HepG2 (cell line): ENCODE measurements at regions of chr14 and their contacts with region 1.

Region 1: GRCh38 chr14:66624299-66624937 is 116.5 kb downstream of the GPHN start:
- DNase-seq: peak; percentile 53
- ATAC-seq: peak; percentile 98
- H3K4me3 ChIP-seq: no peak overlapping the region
- H3K27ac ChIP-seq: no peak overlapping the region
- H3K4me1 ChIP-seq: peaks cover 18% of the 10 kb centered on the region
- H3K27me3 ChIP-seq: no peaks in the 10 kb centered on the region
- CTCF ChIP-seq: peak; percentile 77
- EP300 ChIP-seq: no peak
- POLR2A ChIP-seq: no peak
- RAD21 ChIP-seq: peak; percentile 52; the same call in 1 of the 2 replicates

Region 2: DNA sequence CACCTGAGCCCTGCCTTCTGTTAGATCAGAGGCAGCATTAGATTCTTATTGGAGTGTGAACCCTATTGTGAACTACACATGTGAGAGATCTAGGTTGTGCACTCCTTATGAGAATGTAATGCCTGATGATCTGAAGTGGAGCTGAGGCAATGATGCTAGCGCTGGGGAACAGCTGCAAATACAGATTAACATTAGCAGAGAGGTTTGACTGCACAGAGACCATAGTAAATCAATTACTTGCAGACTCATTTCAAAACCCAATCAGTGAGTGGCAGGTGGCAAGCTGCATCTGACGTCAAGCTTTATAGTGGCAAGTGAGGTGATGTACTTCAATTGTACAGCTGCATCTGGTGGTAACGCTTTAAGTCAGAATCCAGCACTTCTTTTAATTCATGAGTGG is 25.1 kb after region 1 on chr14:
- CTCF ChIA-PET with region 1: no interaction called
- POLR2A ChIA-PET with region 1: no interaction called
- in situ Hi-C with region 1: no loop called
- intact Hi-C with region 1: no loop called
- DNase-seq: no peak
- ATAC-seq: no peak
- H3K4me3 ChIP-seq: no peak overlapping the region
- H3K27ac ChIP-seq: no peak overlapping the region
- H3K4me1 ChIP-seq: 0 out of 2 replicates have a peak, but pooled peaks cover under 1% of the 10 kb centered on the region
- H3K27me3 ChIP-seq: no peaks in the 10 kb centered on the region
- CTCF ChIP-seq: no peak
- EP300 ChIP-seq: no peak
- POLR2A ChIP-seq: no peak
- RAD21 ChIP-seq: no peak

Region 3: GRCh38 chr14:66662374-66662773 is 38.0 kb after region 1 on chr14:
- CTCF ChIA-PET with region 1: interaction called, 9 read pairs
- POLR2A ChIA-PET with region 1: no interaction called
- in situ Hi-C with region 1: no loop called
- intact Hi-C with region 1: loop called (anchors 1 kb)
- DNase-seq: peak; percentile 10
- ATAC-seq: peak; percentile 61; the same call in 2 of the 3 replicates
- H3K4me3 ChIP-seq: no peak overlapping the region
- H3K27ac ChIP-seq: no peak overlapping the region
- H3K4me1 ChIP-seq: no peaks in the 10 kb centered on the region
- H3K27me3 ChIP-seq: no peaks in the 10 kb centered on the region
- CTCF ChIP-seq: peak; percentile 57
- EP300 ChIP-seq: no peak
- POLR2A ChIP-seq: no peak
- RAD21 ChIP-seq: no peak

Region 4: GRCh38 chr14:66746316-66747006 is 122.0 kb after region 1 on chr14:
- CTCF ChIA-PET with region 1: no interaction called
- POLR2A ChIA-PET with region 1: no interaction called
- in situ Hi-C with region 1: no loop called
- intact Hi-C with region 1: loop called (anchors 5 kb)
- DNase-seq: peak; percentile 12
- ATAC-seq: peak; percentile 64
- H3K4me3 ChIP-seq: no peak overlapping the region
- H3K27ac ChIP-seq: no peak overlapping the region
- H3K4me1 ChIP-seq: no peaks in the 10 kb centered on the region
- H3K27me3 ChIP-seq: no peaks in the 10 kb centered on the region
- CTCF ChIP-seq: no peak; the same call in 1 of the 2 replicates
- EP300 ChIP-seq: no peak
- POLR2A ChIP-seq: no peak
- RAD21 ChIP-seq: no peak

Region 5: GRCh38 chr14:67111022-67111421 is 486.6 kb after region 1 on chr14:
- CTCF ChIA-PET with region 1: no interaction called
- POLR2A ChIA-PET with region 1: no interaction called
- in situ Hi-C with region 1: loop called (anchors 10 kb)
- intact Hi-C with region 1: no loop called
- DNase-seq: no peak
- ATAC-seq: no peak
- H3K4me3 ChIP-seq: no peak overlapping the region
- H3K27ac ChIP-seq: no peak overlapping the region
- H3K4me1 ChIP-seq: no peaks in the 10 kb centered on the region
- H3K27me3 ChIP-seq: no peaks in the 10 kb centered on the region
- CTCF ChIP-seq: no peak
- EP300 ChIP-seq: no peak
- POLR2A ChIP-seq: no peak
- RAD21 ChIP-seq: no peak